Caco-2 (cell line): ENCODE measurements at regions of chr18 and their contacts with region 1.

Region 1: GRCh38 chr18:31424383-31424988 is 23.1 kb upstream of the DSG3 start:
- DNase-seq: peak; percentile 21 to 31
- H3K4me3 ChIP-seq: no peak overlapping the region
- H3K4me3 Mint-ChIP-seq: no peak overlapping the region
- H3K27ac Mint-ChIP-seq: no peak overlapping the region
- H3K4me1 ChIP-seq: peaks cover 10% of the 10 kb centered on the region; the same call in 1 of the 2 replicates
- H3K4me1 Mint-ChIP-seq: peaks cover 11% of the 10 kb centered on the region
- H3K27me3 ChIP-seq: no peaks in the 10 kb centered on the region
- H3K27me3 Mint-ChIP-seq: no peaks in the 10 kb centered on the region
- CTCF ChIP-seq: peak; percentile 53

Region 2: DNA sequence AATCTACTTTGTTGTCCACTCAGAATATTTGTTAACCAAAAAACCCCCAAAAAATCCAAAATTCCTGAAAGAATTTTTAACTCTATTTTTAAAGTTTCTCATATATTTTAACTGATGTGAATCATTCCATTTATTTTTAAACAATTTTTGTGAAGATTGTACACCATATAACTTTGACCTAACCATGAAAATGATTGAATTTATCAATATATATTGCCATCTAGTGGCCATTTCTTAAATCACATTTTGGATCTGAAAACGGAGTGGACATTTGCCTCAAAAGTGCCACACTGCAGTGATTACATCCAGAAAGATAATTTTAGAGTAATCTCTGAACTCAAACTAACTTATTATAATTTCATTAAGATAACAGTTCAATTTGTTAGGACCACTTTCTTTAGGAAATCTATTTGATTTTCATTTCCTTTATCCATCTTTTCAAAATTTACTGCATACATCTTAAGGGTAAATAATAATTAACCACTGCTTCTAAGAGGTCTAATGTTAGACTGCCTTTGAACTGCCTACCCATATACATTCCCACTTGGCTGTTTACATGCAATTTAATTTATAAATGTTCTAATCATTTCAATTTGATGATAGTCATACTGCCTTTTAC is 453.0 kb before region 1 on chr18:
- CTCF ChIA-PET with region 1: no interaction called
- POLR2A ChIA-PET with region 1: no interaction called
- intact Hi-C with region 1: loop called (anchors 2 kb)
- DNase-seq: peak in 1 of 2 experiments; percentile 16
- H3K4me3 ChIP-seq: no peak overlapping the region
- H3K4me3 Mint-ChIP-seq: no peak overlapping the region
- H3K27ac Mint-ChIP-seq: no peak overlapping the region
- H3K4me1 ChIP-seq: no peaks in the 10 kb centered on the region
- H3K4me1 Mint-ChIP-seq: no peaks in the 10 kb centered on the region
- H3K27me3 ChIP-seq: no peaks in the 10 kb centered on the region
- H3K27me3 Mint-ChIP-seq: no peaks in the 10 kb centered on the region
- CTCF ChIP-seq: peak; percentile 1 to 41

Region 3: GRCh38 chr18:31099450-31100230 is 324.8 kb before region 1 on chr18:
- CTCF ChIA-PET with region 1: no interaction called
- POLR2A ChIA-PET with region 1: no interaction called
- intact Hi-C with region 1: no loop called
- DNase-seq: no peak
- H3K4me3 ChIP-seq: peak overlapping the region; percentile 69
- H3K4me3 Mint-ChIP-seq: peak overlapping the region; percentile 83
- H3K27ac Mint-ChIP-seq: peak overlapping the region; percentile 53
- H3K4me1 ChIP-seq: no peaks in the 10 kb centered on the region
- H3K4me1 Mint-ChIP-seq: peaks cover 34% of the 10 kb centered on the region
- H3K27me3 ChIP-seq: no peaks in the 10 kb centered on the region
- H3K27me3 Mint-ChIP-seq: no peaks in the 10 kb centered on the region
- CTCF ChIP-seq: no peak

Region 4: DNA sequence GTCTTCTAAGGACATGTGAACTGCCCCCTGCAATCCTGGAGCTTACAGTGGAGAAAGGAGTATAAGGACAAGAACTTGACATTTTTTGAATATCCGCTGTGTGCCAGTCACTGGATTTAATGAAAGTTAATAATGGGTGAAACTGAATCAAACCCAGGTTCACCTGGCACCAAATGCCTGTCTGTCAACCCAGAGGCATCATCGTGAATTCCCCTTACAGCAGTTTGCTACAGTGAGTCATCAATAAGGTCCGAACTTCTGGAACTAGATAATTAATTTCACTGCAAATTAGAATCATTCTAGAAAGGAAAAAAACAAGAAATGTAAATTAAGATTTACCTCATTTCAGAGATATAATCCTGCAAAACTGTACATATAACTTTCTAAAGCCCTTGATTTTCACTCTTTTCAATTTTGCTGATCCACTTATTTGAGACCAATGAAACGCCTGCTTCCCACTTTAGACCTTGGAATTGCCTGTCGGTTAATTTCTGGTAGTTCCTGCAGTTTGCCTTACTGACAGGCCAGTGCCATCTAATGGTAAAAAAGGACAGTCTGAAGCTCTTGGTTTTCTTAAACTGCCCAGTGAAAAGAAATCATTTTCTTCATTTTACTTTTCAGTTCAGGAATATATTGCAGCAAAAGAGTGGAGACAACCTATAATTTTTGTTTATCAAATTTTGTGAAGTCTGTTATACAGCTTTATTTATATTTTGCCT is 81.7 kb after region 1 on chr18:
- CTCF ChIA-PET with region 1: no interaction called
- POLR2A ChIA-PET with region 1: no interaction called
- intact Hi-C with region 1: loop called (anchors 1 kb)
- DNase-seq: no peak
- H3K4me3 ChIP-seq: no peak overlapping the region
- H3K4me3 Mint-ChIP-seq: no peak overlapping the region
- H3K27ac Mint-ChIP-seq: no peak overlapping the region
- H3K4me1 ChIP-seq: peaks cover 15% of the 10 kb centered on the region
- H3K4me1 Mint-ChIP-seq: peaks cover 6% of the 10 kb centered on the region
- H3K27me3 ChIP-seq: no peaks in the 10 kb centered on the region
- H3K27me3 Mint-ChIP-seq: no peaks in the 10 kb centered on the region
- CTCF ChIP-seq: peak in 1 of 2 experiments; percentile 25

Region 5: GRCh38 chr18:31850844-31851243 is 426.4 kb after region 1 on chr18:
- CTCF ChIA-PET with region 1: no interaction called
- POLR2A ChIA-PET with region 1: no interaction called
- intact Hi-C with region 1: no loop called
- DNase-seq: no peak
- H3K4me3 ChIP-seq: no peak overlapping the region
- H3K4me3 Mint-ChIP-seq: no peak overlapping the region
- H3K27ac Mint-ChIP-seq: no peak overlapping the region
- H3K4me1 ChIP-seq: no peaks in the 10 kb centered on the region
- H3K4me1 Mint-ChIP-seq: no peaks in the 10 kb centered on the region
- H3K27me3 ChIP-seq: no peaks in the 10 kb centered on the region
- H3K27me3 Mint-ChIP-seq: no peaks in the 10 kb centered on the region
- CTCF ChIP-seq: no peak

Region 6: GRCh38 chr18:32060026-32060425 is 635.5 kb after region 1 on chr18:
- CTCF ChIA-PET with region 1: no interaction called
- POLR2A ChIA-PET with region 1: no interaction called
- intact Hi-C with region 1: no loop called
- DNase-seq: no peak
- H3K4me3 ChIP-seq: no peak overlapping the region
- H3K4me3 Mint-ChIP-seq: no peak overlapping the region
- H3K27ac Mint-ChIP-seq: no peak overlapping the region
- H3K4me1 ChIP-seq: no peaks in the 10 kb centered on the region
- H3K4me1 Mint-ChIP-seq: no peaks in the 10 kb centered on the region
- H3K27me3 ChIP-seq: no peaks in the 10 kb centered on the region
- H3K27me3 Mint-ChIP-seq: no peaks in the 10 kb centered on the region
- CTCF ChIP-seq: no peak